ENCODE measurements at regions of chr16 and their contacts with region 1.

Region 1: DNA sequence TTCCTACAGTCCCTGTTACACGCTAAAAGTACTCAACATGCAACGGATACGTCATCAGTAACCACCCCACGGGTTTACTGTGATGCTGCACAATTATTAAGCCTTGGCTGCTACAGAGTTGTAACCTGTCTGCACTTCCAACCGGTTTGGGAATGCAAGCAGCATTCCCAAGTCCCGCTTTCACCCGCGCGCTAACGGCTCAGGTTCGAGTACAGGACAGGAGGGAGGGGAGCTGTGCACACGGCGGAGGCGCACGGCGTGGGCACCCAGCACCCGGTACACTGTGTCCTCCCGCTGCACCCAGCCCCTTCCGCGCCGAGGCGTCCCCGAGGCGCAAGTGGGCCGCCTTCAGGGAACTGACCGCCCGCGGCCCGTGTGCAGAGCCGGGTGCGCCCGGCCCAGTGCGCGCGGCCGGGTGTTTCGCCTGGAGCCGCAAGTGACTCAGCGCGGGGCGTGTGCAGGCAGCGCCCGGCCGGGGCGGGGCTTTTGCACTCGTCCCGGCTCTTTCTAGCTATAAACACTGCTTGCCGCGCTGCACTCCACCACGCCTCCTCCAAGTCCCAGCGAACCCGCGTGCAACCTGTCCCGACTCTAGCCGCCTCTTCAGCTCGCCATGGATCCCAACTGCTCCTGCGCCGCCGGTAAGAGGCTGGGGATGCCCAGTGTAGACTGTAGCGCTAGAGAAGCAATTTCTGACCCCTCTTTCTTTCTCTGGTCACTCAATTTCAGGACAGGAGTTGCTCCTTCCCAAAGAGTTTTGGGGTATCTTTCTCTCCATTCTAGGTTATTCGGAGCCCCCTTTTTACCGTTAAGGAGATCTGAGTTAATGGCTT is at the start of gene MT2A:
- DNase-seq: peak; percentile 97 to 98
- H3K4me3 ChIP-seq: peak within 1 kb of the TSS; percentile 65 to 76
- H3K27ac ChIP-seq: peak within 1 kb of the TSS; percentile 83 to 85
- H3K4me1 ChIP-seq: peaks cover 0 to 56% (median 47%) of the 10 kb centered on the region in 4 donors
- H3K27me3 ChIP-seq: no peaks in the 10 kb centered on the region
- CTCF ChIP-seq: no peak

Region 2: DNA sequence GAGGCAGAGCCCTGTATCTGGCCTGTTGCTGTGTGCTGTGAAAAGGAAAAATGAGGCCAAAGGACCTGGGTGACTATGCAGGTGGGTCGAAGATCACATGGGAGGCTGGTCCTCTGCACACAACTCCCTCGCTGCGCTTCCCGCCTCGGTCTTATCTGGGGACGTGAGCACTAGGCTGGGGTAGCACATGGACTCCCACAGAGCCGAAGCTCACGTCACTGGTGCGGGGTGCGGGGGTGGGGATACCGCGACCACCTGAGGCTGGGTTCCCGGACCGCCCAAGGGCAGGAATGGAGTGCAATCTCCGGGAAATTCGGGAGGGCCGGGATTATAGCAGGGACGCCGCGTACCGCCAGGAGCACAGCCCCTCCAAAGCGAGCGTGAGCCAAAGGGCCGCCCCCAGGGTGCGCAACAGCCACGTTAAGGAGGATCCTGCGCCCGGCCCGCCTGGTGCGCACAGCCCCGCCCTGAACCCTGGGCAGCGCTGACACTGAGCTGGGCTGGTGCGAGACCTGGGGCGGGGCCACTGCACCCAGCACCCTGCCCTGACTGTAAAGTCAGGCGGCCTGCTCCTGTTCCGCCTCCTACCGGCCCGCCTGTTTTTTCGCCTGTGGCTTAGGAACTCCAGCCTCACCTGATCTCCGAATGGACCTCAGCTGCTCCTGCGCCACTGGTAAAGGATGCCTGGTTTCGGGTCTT is 35.0 kb after region 1 on chr16:
- intact Hi-C with region 1: loop called (anchors 5 kb)
- DNase-seq: peak; percentile 76 to 94
- H3K4me3 ChIP-seq: peak overlapping the region; percentile 39 to 50
- H3K27ac ChIP-seq: peak overlapping the region; percentile 58 to 81
- H3K4me1 ChIP-seq: peaks cover 0 to 24% (median 19%) of the 10 kb centered on the region in 4 donors
- H3K27me3 ChIP-seq: peaks cover 0 to 7% of the 10 kb centered on the region in 2 donors
- CTCF ChIP-seq: peak; percentile 52 to 63

Region 3: GRCh38 chr16:56681939-56682702 is 73.9 kb after region 1 on chr16 and contains the start of gene MT1X:
- intact Hi-C with region 1: loop called (anchors 5 kb)
- DNase-seq: peak; percentile 94 to 98
- H3K4me3 ChIP-seq: peak within 1 kb of the TSS; percentile 80 to 82
- H3K27ac ChIP-seq: peak within 1 kb of the TSS; percentile 87 to 88
- H3K4me1 ChIP-seq: peaks cover 0 to 39% (median 10%) of the 10 kb centered on the region in 4 donors
- H3K27me3 ChIP-seq: no peaks in the 10 kb centered on the region
- CTCF ChIP-seq: no peak